Activated CD8-positive, alpha-beta T cell treated with anti-CD3 and anti-CD28 coated beads, Interleukin-2, amount 10 ng/mL, durations not matched to agents 7 days and 5 days (primary cell): ENCODE measurements at regions of chr3 and their contacts with region 1.

Region 1: DNA sequence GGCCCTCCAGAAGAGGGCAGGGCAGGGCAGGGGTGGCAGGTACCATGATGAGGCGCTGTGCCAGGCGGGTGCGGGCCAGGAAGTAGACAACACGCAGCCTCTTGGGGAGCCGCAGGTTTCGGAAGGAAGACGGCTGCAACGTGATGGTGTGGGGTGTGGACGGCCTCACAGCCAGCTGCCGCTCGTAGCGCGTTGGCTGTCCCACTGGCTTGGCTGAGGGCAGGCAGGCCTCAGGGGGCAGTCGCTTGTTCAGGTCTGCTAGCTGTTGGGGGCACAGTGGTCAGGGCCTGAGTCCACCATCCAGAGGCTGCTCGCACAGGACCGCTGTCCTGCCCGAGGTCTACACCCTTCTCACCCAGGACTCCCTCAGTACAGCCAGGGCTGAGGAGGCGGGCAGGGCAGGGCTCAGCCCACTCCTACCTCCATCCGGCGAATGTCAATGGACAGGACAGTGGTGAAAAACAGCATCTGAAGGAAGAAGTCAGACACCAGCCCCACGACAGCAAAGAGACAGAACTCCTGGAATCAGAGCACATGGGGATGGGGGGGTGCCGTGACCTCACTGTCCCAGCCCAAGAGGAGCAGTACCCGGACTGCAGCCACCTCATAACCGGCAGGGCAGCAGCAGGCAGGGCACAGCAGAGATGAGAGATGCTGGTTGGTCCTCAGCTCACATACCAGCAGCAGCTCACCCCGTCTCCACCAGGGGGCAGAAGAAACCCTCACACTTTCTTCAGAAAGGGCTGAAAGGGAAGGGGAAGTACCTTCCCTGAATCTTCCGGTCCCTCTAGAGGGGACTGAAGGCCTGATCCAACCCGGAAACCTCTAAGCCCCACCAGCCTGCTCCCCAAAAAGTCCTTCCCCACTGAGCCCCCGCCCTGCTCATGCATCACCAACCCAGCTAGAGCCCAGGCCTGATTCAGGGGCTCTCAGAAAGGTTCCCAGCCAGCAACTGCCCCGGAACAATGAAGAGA is 40.0 kb downstream of the PTPN23 start:
- DNase-seq: peak; percentile 95
- ATAC-seq: peak; percentile 96
- H3K4me3 Mint-ChIP-seq: peak overlapping the region; percentile 69
- H3K27ac Mint-ChIP-seq: peak overlapping the region; percentile 99
- H3K4me1 Mint-ChIP-seq: peaks cover 23% of the 10 kb centered on the region
- H3K27me3 Mint-ChIP-seq: no peaks in the 10 kb centered on the region

Region 2: GRCh38 chr3:47082519-47082918 is 338.3 kb before region 1 on chr3:
- CTCF ChIA-PET with region 1: no interaction called
- POLR2A ChIA-PET with region 1: no interaction called
- DNase-seq: no peak
- ATAC-seq: no peak
- H3K4me3 Mint-ChIP-seq: no peak overlapping the region
- H3K27ac Mint-ChIP-seq: no peak overlapping the region
- H3K4me1 Mint-ChIP-seq: peaks cover 11% of the 10 kb centered on the region
- H3K27me3 Mint-ChIP-seq: no peaks in the 10 kb centered on the region

Region 3: DNA sequence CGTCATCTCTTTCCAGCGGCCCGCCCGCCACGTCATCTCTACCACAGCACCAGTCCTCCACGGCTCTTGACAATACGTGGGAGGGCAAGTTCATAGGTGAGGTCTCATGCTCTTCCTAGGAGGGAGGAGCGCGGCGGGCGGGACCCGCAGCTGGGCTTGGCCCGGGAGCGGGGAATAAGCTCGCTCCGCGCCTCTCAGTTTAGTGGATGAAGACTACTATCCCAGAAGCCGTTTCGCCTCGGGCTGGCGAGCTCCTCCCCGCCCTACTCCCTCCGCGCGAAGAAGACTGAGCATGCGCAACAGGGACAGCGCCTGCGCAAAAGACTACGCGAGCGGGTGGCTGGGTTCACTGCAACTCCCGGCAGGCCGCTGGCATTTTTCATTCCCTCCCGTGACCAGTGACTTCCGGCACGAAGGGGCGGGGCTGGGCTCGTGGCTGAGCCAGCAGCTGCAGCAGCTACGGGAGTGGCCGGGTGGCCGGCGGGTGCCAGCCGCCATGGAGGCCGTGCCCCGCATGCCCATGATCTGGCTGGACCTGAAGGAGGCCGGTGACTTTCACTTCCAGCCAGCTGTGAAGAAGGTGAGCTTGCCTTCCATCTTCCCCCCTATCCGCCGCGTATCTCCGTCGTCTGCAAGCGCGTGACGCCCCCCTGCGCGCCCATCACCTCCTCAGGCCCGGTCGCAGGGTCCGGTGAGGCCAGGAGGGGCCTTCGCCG is 40.0 kb before region 1 on chr3 and contains the start of gene PTPN23:
- CTCF ChIA-PET with region 1: interaction called, 10 read pairs
- POLR2A ChIA-PET with region 1: no interaction called
- DNase-seq: peak; percentile 99
- ATAC-seq: peak; percentile 83
- H3K4me3 Mint-ChIP-seq: peak within 1 kb of the TSS; percentile 100
- H3K27ac Mint-ChIP-seq: peak within 1 kb of the TSS; percentile 100
- H3K4me1 Mint-ChIP-seq: peaks cover 40% of the 10 kb centered on the region
- H3K27me3 Mint-ChIP-seq: no peaks in the 10 kb centered on the region
- total RNA-seq, gene PTPN23: 31.0 to 33.2 TPM

Region 4: DNA sequence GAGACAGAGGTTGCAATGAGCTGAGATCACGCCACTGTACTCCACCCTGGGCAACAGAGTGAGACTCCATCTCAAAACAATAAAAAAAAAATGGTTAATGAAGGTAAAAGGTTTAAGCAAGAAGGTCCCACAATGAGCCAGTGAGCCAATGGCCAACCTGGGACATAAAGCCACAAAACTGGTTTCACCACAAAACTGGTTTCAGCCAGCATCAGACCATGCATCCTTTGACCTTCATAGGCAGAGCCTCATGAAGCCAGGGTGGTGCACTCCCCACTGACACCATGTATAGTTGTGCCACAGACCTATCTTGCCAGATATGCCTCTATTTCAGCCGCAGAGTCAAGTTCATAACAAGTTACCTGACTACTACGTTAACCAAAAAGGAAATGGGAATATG is 13.0 kb after region 1 on chr3:
- CTCF ChIA-PET with region 1: interaction called, 30 read pairs
- POLR2A ChIA-PET with region 1: no interaction called
- DNase-seq: no peak
- ATAC-seq: no peak
- H3K4me3 Mint-ChIP-seq: no peak overlapping the region
- H3K27ac Mint-ChIP-seq: peak overlapping the region; percentile 15
- H3K4me1 Mint-ChIP-seq: peaks cover 9% of the 10 kb centered on the region
- H3K27me3 Mint-ChIP-seq: no peaks in the 10 kb centered on the region

Region 5: DNA sequence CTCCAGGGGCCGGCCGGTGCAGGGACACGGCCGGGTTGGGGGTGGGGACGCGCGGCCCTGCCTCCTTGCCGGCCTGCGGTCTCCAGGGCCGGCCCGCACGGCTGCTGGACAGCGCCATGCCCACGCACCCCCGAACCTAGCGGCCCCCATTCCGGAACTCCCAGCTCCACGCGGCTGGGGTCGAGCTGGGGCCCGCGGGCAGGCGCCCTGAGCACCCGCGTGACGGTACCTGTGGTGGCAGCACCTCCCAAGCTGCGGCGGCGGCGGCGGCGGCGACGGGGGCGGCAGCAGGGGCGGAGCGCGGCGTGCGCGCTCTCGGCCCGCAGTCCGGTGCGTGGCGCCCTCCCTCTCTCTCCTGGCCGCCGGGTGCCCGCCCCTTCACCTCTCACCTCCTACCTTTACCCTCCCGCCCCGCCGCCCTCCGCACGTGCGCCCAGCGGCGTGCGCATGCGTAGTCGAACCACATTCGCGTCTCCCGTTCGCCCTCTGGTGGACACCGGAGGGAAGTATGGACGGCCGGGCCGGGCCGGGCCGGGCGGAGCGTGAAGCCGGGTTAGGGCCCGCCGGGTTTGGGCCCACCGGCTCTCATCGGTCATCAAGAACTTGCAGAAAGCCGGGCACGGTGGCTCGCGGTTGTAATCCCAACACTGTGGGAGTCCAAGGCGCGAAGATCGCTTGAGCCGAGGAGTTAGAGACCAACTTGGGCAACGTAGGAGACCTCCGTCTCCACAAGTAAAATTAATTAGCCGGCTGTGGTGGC is 55.0 kb after region 1 on chr3 and contains the start of gene SCAP:
- CTCF ChIA-PET with region 1: interaction called, 100 read pairs
- POLR2A ChIA-PET with region 1: interaction called, 10 read pairs
- DNase-seq: peak; percentile 96
- ATAC-seq: peak; percentile 93
- H3K4me3 Mint-ChIP-seq: peak within 1 kb of the TSS; percentile 93
- H3K27ac Mint-ChIP-seq: peak within 1 kb of the TSS; percentile 87
- H3K4me1 Mint-ChIP-seq: peaks cover 31% of the 10 kb centered on the region
- H3K27me3 Mint-ChIP-seq: no peaks in the 10 kb centered on the region
- total RNA-seq, gene SCAP: 57.5 to 60.7 TPM

Region 6: DNA sequence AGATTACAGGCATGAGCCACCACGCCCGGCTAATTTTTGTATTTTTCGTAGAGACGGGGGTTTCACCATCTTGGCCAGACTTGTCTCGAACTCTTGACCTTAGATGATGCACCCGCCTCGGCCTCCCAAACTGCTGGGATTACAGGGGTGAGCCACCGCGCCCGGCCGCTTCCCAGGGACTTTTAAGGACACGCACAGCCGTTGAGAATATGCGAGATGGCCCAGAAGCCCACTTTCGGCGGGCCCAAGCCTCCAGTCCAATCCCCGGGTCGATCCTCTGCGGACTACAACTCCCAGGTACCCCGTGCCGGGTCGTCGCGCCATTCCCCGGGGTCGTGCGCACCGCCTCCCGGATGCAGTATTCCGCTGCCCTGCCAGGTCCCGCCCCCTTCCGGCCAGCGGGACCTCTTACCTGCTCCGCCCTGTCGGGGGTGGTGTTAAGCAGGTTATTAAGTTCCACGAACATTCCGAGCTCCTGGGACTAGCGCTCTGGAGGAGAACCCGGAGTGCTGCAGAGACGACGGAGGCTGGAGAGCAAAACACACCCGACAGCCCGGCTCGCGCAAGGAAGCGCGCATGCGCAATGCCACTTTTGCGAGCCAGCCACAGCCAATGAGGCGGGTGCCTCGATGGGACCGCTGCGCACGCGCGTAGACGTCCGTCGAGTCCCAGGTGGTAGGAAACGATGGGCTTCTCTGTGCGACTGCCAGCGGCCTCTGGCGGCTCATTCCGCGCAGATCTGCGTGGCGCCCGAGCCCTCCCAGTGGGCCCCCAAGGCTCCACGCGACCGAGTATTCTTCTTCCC is 92.5 kb after region 1 on chr3 and contains the start of gene ELP6:
- CTCF ChIA-PET with region 1: interaction called, 26 read pairs
- POLR2A ChIA-PET with region 1: interaction called, 5 read pairs
- DNase-seq: peak; percentile 98
- ATAC-seq: peak; percentile 94
- H3K4me3 Mint-ChIP-seq: peak within 1 kb of the TSS; percentile 99
- H3K27ac Mint-ChIP-seq: peak within 1 kb of the TSS; percentile 99
- H3K4me1 Mint-ChIP-seq: peaks cover 19% of the 10 kb centered on the region
- H3K27me3 Mint-ChIP-seq: peaks cover 6% of the 10 kb centered on the region
- total RNA-seq, gene ELP6: 52.1 to 53.0 TPM

Region 7: DNA sequence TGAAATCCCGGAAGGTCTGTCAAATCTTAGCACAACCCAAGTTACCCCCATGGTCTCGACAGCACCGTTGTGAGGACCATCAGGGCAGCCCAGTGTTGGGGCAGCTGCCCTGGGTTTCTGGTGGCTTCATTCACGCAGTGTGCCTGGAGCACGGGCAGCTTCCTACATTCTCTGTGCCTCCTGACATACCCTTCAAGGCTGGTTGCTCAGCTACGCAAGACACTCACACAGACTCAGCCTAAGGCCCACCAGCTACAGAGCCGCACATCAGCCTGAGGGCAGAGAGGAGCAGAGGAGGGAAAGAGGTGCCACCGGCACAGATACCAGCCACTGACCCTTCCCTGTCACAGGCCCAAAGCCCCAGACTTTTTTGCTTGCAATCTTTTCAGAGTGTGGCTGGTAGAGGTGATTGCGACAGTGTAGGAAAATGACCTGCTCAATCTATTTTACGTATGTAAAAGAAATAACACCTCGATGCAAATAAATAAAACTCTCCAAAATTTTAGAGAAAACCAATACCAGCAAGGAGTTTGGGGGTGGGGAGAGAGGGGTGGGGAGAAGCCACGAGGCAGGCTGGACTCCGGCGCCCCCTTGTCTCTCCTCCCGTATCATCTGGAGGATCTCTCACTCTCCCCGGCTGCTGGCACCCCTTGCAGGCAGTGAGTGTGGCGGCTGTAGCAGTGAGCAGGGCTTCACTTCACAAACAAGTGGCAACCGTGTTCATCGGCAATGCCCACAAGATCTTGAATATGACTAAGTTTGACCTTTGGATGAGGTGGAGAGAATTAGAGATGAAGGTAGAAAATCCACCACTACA is 145.1 kb after region 1 on chr3:
- CTCF ChIA-PET with region 1: no interaction called
- POLR2A ChIA-PET with region 1: no interaction called
- DNase-seq: no peak
- ATAC-seq: no peak
- H3K4me3 Mint-ChIP-seq: no peak overlapping the region
- H3K27ac Mint-ChIP-seq: no peak overlapping the region
- H3K4me1 Mint-ChIP-seq: no peaks in the 10 kb centered on the region
- H3K27me3 Mint-ChIP-seq: peaks cover 2% of the 10 kb centered on the region